Right ventricle myocardium superior (tissue), 1 donor: ENCODE measurements at regions of chr5 and their contacts with region 1.

Region 1: GRCh38 chr5:76601470-76601869 is 21.7 kb downstream of the F2RL2 start:
- DNase-seq: no peak
- ATAC-seq: peak; percentile 73

Region 2: GRCh38 chr5:76556511-76557221 is 44.8 kb before region 1 on chr5:
- intact Hi-C with region 1: no loop called
- DNase-seq: no peak
- ATAC-seq: no peak

Region 3: GRCh38 chr5:76775921-76776320 is 174.5 kb after region 1 on chr5:
- intact Hi-C with region 1: loop called (anchors 2 kb)
- DNase-seq: no peak
- ATAC-seq: no peak